ENCODE measurements at regions of chr20 and their contacts with region 1.

Region 1: GRCh38 chr20:39070484-39071231 is 108.5 kb downstream of the DHX35 start:
- DNase-seq: no peak
- H3K4me3 ChIP-seq: no peak overlapping the region
- H3K4me3 Mint-ChIP-seq: no peak overlapping the region
- H3K27ac Mint-ChIP-seq: no peak overlapping the region
- H3K4me1 ChIP-seq: no peaks in the 10 kb centered on the region
- H3K4me1 Mint-ChIP-seq: no peaks in the 10 kb centered on the region
- H3K27me3 ChIP-seq: peaks cover 2% of the 10 kb centered on the region; the same call in 1 of the 2 replicates
- H3K27me3 Mint-ChIP-seq: peaks cover 35% of the 10 kb centered on the region
- CTCF ChIP-seq: no peak

Region 2: DNA sequence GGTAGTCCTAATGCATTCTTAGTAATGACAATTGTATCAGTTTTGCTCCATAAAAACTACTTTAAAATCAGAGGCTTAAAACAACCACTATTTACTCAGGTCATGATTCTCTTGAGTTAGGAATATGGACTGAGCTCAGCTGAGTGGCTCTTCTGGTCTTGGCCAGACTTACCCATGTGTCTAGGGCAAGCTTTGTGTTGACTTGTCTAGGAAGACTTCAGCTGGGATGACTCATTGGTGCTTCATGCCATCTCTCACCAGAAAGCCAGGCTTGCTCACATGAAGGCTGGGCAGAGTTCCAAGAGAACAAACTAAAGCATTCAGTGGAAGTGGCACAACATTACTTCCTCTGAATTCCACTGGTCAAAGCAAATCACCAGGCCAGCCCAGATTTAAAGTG is 46.8 kb after region 1 on chr20:
- CTCF ChIA-PET with region 1: interaction called, 12 read pairs
- POLR2A ChIA-PET with region 1: no interaction called
- intact Hi-C with region 1: no loop called
- DNase-seq: no peak
- H3K4me3 ChIP-seq: no peak overlapping the region
- H3K4me3 Mint-ChIP-seq: no peak overlapping the region
- H3K27ac Mint-ChIP-seq: no peak overlapping the region
- H3K4me1 ChIP-seq: no peaks in the 10 kb centered on the region
- H3K4me1 Mint-ChIP-seq: no peaks in the 10 kb centered on the region
- H3K27me3 ChIP-seq: no peaks in the 10 kb centered on the region
- H3K27me3 Mint-ChIP-seq: peaks cover 19% of the 10 kb centered on the region
- CTCF ChIP-seq: no peak